GM18951 (cell line): ENCODE measurements at regions of chr12 and their contacts with region 1.

Region 1: DNA sequence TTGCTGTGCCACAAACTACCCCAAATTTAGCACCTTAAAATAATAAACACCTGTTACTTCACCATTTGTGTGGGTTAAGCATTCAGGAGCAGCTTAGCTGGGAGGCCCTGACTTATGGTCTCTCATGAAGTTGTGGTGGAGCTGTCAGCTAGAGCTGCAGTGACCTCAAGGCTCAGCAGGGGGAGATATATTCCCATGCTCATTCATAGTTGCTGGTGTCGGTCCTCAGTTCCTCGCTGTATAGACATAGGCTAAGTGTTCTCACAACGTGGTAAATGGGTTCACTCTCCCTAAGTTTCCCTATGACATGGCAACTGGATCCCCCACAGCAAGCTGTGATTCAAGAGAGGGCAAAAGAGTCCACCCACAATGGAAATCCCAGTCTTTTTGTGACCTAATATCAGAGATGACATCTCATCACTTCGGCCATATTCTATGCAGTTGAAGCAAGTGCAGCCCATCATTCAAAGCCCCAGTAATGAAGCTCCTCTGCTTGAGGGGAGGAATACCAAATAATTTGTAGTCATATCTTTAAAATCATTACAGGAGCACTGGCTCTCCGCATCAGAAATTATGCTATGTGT is 41.1 kb downstream of the PRB3 start:
- POLR2A ChIP-seq: no peak

Region 2: DNA sequence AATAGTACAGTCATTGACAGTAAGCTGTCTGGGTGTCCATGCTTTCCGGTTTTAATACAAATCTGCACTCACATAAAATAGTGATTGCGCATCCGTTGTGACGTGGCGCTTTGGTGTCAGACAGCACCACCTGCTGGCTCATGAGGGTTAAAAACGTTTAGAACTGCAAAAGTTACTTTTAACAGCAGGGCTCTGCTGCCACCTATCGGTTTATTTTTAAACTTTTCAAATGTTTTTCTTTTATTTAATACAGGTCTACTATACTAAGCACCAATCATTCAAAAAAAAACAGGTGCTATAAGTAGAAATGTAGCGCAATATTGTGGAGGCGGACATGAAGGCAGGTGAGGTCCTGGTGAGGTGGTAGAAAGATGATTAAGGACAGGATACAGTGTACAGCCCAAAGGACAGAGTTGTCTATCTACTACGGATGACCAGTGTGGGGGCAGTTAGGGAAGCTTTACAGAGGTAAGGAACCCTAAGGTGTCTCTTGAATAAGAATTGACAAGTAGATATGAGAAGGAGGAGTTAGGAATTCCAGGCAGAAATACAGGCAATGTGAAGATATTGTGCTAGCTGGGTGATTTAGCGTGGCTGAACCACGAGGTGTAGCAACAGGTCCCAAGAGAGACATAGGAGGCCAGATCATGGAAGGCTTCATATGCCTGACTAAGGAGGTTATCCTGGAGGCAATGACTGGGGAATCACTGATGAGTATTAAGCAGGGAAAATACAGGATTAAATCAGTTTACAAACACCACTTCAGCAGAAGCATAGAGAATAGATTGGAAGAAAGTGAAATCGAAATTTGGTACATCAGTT is 258.4 kb after region 1 on chr12:
- in situ Hi-C with region 1: loop called (anchors 25 kb)
- POLR2A ChIP-seq: no peak

Region 3: GRCh38 chr12:11553871-11554533 is 325.6 kb after region 1 on chr12:
- in situ Hi-C with region 1: no loop called
- POLR2A ChIP-seq: no peak

Region 4: GRCh38 chr12:12070674-12071656 is 842.6 kb after region 1 on chr12 and contains the start of gene BCL2L14:
- in situ Hi-C with region 1: loop called (anchors 25 kb)
- POLR2A ChIP-seq: no peak